Activated T-helper 2 cell treated with anti-CD3 and anti-CD28 coated beads, Interferon-gamma antibody, Interleukin-2, Interleukin-4, amounts not matched to agents 10 μg/mL and 5 μg/mL and 100 μg/mL, durations not matched to agents 14 hours and 24 hours and 36 hours (primary cell): ENCODE measurements at regions of chr6 and their contacts with region 1.

Region 1: DNA sequence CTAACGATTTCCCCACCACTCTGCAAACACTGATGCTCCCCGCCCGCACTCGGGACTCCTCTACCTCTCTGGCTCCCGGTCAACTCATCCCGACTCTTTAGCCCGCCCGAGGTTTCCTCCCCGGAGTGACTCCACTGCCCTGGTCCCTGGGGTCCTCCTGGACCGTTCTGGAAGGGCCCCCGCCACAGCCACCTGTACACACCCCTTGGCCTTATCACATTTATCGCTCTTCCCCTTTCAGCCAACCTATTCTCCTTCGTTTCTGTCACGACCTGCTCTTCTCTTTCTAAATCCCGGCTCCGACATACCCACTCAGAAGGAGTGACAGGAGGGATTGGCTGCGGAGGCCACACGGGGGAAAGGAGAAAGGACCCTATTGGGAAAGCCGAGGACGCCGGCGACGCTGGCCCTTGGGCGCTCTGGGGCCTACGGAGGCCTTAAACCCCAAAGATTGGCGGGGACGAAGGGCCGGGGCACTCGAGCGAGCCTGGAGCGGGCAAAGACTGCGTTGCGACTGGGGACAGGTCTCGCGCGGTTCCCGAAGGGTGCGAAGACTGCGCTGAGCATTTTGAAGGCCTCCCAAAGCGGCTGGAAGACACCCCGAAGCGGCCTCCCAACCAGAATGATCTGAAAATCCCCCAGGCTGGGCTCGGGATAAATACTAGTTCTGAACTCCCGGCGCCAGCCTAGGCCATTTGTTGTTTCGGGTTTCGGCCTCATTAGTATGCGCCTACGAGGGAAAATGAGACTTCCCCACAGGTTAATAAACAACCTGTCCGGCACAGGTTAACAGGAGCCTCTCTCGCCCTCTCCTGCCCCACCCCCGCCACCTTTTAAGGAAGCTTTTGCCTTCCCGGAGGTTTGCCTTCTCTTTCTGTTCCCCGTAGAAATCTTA is 9.2 kb downstream of the SIM1 start:
- DNase-seq: no peak
- H3K4me3 Mint-ChIP-seq: no peak overlapping the region
- H3K27ac Mint-ChIP-seq: peak overlapping the region; percentile 34
- H3K4me1 Mint-ChIP-seq: peaks cover 1% of the 10 kb centered on the region
- H3K27me3 Mint-ChIP-seq: peaks cover 66% of the 10 kb centered on the region

Region 2: GRCh38 chr6:101401792-101402621 is 946.5 kb after region 1 on chr6:
- intact Hi-C with region 1: loop called (anchors 5 kb)
- DNase-seq: no peak
- H3K4me3 Mint-ChIP-seq: no peak overlapping the region
- H3K27ac Mint-ChIP-seq: no peak overlapping the region
- H3K4me1 Mint-ChIP-seq: peaks cover 4% of the 10 kb centered on the region
- H3K27me3 Mint-ChIP-seq: peaks cover 46% of the 10 kb centered on the region